ENCODE measurements at regions of chr2 and their contacts with region 1.

Region 1: GRCh38 chr2:117835990-117836760 is 21.7 kb downstream of the DDX18 start:
- DNase-seq: peak; percentile 90 to 96 (median 95)
- ATAC-seq: peak; percentile 97
- H3K4me3 ChIP-seq: peak overlapping the region; percentile 20
- H3K27ac ChIP-seq: no peak overlapping the region
- H3K4me1 ChIP-seq: no peaks in the 10 kb centered on the region
- H3K27me3 ChIP-seq: no peaks in the 10 kb centered on the region

Region 2: GRCh38 chr2:117801826-117802225 is 34.3 kb before region 1 on chr2:
- intact Hi-C with region 1: no loop called
- DNase-seq: no peak
- ATAC-seq: no peak
- H3K4me3 ChIP-seq: no peak overlapping the region
- H3K27ac ChIP-seq: no peak overlapping the region
- H3K4me1 ChIP-seq: no peaks in the 10 kb centered on the region
- H3K27me3 ChIP-seq: no peaks in the 10 kb centered on the region

Region 3: GRCh38 chr2:117936871-117937428 is 100.8 kb after region 1 on chr2:
- intact Hi-C with region 1: loop called in 1 of 4 experiments (anchors 10 kb)
- DNase-seq: peak in 2 of 3 donors; percentile 45 to 71
- ATAC-seq: peak; percentile 76 to 82
- H3K4me3 ChIP-seq: no peak overlapping the region
- H3K27ac ChIP-seq: peak overlapping the region; percentile 54
- H3K4me1 ChIP-seq: peaks cover 2% of the 10 kb centered on the region
- H3K27me3 ChIP-seq: no peaks in the 10 kb centered on the region

Region 4: DNA sequence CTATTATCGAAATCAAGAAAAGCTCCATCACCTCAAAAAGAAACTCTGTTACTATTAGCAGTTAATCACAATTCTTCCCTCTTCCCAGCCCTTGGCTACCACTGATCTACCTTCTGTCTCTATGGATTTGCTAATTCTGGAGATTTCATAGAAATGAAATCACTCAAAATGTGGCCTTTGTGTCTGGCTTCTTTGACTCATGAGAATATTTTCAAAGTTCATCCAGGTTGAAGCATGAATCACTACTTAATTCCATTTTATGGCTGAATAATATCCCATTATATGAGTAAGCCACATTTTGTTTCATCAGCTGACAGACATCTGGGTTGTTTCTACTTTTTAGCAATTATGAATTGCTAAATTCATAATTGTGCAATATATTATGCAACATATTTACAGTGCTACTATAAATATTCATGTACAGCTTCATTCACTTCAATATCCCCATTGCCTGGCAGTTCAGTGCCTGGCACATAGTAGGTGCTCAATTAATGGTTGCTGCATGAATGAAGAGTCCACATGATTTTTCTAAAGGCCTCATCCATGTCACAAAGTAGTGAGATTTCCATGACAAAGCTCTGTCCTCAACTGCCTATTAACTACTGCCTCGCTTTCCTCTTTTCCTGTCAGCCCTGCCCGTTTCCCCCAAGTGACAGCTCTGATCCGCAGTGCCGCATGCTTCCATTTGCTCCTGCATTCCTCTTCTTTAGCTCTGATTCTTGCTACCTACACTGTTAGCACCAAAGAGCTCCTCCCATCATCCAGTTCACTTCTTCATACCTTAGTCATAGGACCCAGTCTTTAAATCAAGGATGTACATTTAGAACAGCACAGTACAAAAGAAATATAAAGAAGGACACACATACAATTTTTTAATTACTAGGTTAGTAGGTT is 144.9 kb after region 1 on chr2:
- intact Hi-C with region 1: loop called in 1 of 4 experiments (anchors 10 kb)
- DNase-seq: no peak
- ATAC-seq: peak; percentile 26 to 68
- H3K4me3 ChIP-seq: no peak overlapping the region
- H3K27ac ChIP-seq: peak overlapping the region; percentile 58
- H3K4me1 ChIP-seq: peaks cover 4% of the 10 kb centered on the region
- H3K27me3 ChIP-seq: no peaks in the 10 kb centered on the region

Region 5: GRCh38 chr2:118003396-118003824 is 167.2 kb after region 1 on chr2:
- intact Hi-C with region 1: loop called in 3 of 4 experiments (anchors 5 to 10 kb)
- DNase-seq: no peak
- ATAC-seq: peak; percentile 90 to 93
- H3K4me3 ChIP-seq: no peak overlapping the region
- H3K27ac ChIP-seq: no peak overlapping the region
- H3K4me1 ChIP-seq: peaks cover under 1% of the 10 kb centered on the region
- H3K27me3 ChIP-seq: no peaks in the 10 kb centered on the region

Region 6: GRCh38 chr2:118443596-118443995 is 607.4 kb after region 1 on chr2:
- intact Hi-C with region 1: no loop called
- DNase-seq: no peak
- ATAC-seq: no peak
- H3K4me3 ChIP-seq: no peak overlapping the region
- H3K27ac ChIP-seq: no peak overlapping the region
- H3K4me1 ChIP-seq: no peaks in the 10 kb centered on the region
- H3K27me3 ChIP-seq: no peaks in the 10 kb centered on the region